ENCODE measurements at regions of chr5 and their contacts with region 1.

Region 1: GRCh38 chr5:159316519-159317383 is 13.5 kb downstream of the IL12B start:
- H3K4me3 ChIP-seq: no peak overlapping the region
- H3K27ac ChIP-seq: no peak overlapping the region
- H3K4me1 ChIP-seq: no peaks in the 10 kb centered on the region
- CTCF ChIP-seq: peak; percentile 73

Region 2: DNA sequence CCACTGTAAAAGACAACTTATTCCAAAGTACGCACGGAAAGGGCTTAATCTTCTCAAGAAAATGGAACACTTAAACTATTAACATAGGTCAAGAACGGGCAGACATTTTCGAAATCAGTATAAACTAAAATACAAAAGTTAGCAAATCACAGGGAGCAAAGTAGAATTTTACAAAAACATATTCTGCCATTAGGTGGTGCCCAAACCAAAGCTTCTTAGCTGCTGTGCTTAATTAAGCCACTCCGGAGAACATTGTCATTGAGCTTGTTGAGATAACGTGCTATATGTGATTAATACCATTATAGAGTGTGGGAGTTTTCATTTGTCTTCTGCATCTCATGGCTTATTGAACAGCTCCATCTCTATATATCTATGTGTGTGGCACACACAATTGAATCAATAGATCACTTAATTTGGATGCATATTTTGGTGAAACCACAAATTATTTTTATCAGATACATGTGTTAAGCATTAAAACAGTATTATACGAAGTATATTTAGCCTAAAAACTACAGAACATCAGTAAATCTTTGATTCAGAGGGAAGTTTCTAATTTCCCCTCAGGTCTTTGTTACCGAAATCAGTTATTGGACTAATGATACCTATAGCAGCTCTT is 30.2 kb before region 1 on chr5:
- CTCF ChIA-PET with region 1: interaction called, 21 read pairs
- POLR2A ChIA-PET with region 1: interaction called, 4 read pairs
- H3K4me3 ChIP-seq: no peak overlapping the region
- H3K27ac ChIP-seq: no peak overlapping the region
- H3K4me1 ChIP-seq: no peaks in the 10 kb centered on the region
- CTCF ChIP-seq: no peak

Region 3: GRCh38 chr5:159331093-159331973 is 14.6 kb after region 1 on chr5:
- CTCF ChIA-PET with region 1: interaction called, 17 read pairs
- POLR2A ChIA-PET with region 1: no interaction called
- H3K4me3 ChIP-seq: peak overlapping the region; percentile 63
- H3K27ac ChIP-seq: peak overlapping the region; percentile 70
- H3K4me1 ChIP-seq: peaks cover 3% of the 10 kb centered on the region; the same call in 1 of the 2 replicates
- CTCF ChIP-seq: peak; percentile 86

Region 4: GRCh38 chr5:160213537-160213936 is 896.8 kb after region 1 on chr5:
- CTCF ChIA-PET with region 1: no interaction called
- POLR2A ChIA-PET with region 1: no interaction called
- H3K4me3 ChIP-seq: no peak overlapping the region
- H3K27ac ChIP-seq: no peak overlapping the region
- H3K4me1 ChIP-seq: no peaks in the 10 kb centered on the region
- CTCF ChIP-seq: no peak

Measured in HEK293 (cell line).